H1 (cell line): ENCODE measurements at regions of chr1 and their contacts with region 1.

Region 1: GRCh38 chr1:206658264-206658980 is 23.1 kb downstream of the DYRK3 start:
- DNase-seq: peak in 1 of 2 experiments; percentile 93
- H3K4me3 ChIP-seq: peak overlapping the region in 1 of 4 experiments; percentile 51; a peak in 2 of 8 replicates
- H3K27ac ChIP-seq: no peak overlapping the region
- H3K4me1 ChIP-seq: peaks cover 0 to 12% (median 5%) of the 10 kb centered on the region in 4 experiments; a peak in 6 of 7 replicates
- H3K27me3 ChIP-seq: peaks cover 0 to 17% (median 10%) of the 10 kb centered on the region in 4 experiments; a peak in 6 of 7 replicates
- CTCF ChIP-seq: peak; percentile 83 to 86 (median 84)
- EP300 ChIP-seq: no peak
- POLR2A ChIP-seq: no peak
- RAD21 ChIP-seq: peak; percentile 56 to 63

Region 2: GRCh38 chr1:206685769-206686485 is 27.5 kb after region 1 on chr1:
- CTCF ChIA-PET with region 1: interaction called, 48 read pairs
- POLR2A ChIA-PET with region 1: interaction called, 4 read pairs
- DNase-seq: no peak
- H3K4me3 ChIP-seq: peak overlapping the region; percentile 80 to 88 (median 82)
- H3K27ac ChIP-seq: peak overlapping the region; percentile 52; the same call in 1 of the 2 replicates
- H3K4me1 ChIP-seq: peaks cover 10 to 27% (median 15%) of the 10 kb centered on the region in 4 experiments
- H3K27me3 ChIP-seq: peaks cover 9 to 31% (median 26%) of the 10 kb centered on the region in 4 experiments
- CTCF ChIP-seq: no peak
- EP300 ChIP-seq: no peak
- POLR2A ChIP-seq: peak in 1 of 2 experiments; percentile 14; a peak in 1 of 3 replicates
- RAD21 ChIP-seq: no peak